ENCODE measurements at regions of chr20 and their contacts with region 1.

Region 1: GRCh38 chr20:58236612-58237330 is 8.3 kb upstream of the ANKRD60 start:
- DNase-seq: no peak
- ATAC-seq: peak; percentile 97
- H3K4me3 ChIP-seq: no peak overlapping the region; a peak in 1 of 4 replicates
- H3K27ac ChIP-seq: no peak overlapping the region
- H3K4me1 ChIP-seq: no peaks in the 10 kb centered on the region
- H3K27me3 ChIP-seq: no peaks in the 10 kb centered on the region
- CTCF ChIP-seq: peak; percentile 67 to 95 (median 94)
- POLR2A ChIP-seq: no peak
- RAD21 ChIP-seq: peak; percentile 86

Region 2: GRCh38 chr20:58447511-58448391 is 211.0 kb after region 1 on chr20:
- CTCF ChIA-PET with region 1: no interaction called
- POLR2A ChIA-PET with region 1: no interaction called
- RAD21 ChIA-PET with region 1: no interaction called
- intact Hi-C with region 1: loop called (anchors 1 kb)
- DNase-seq: peak; percentile 33
- ATAC-seq: peak; percentile 89
- H3K4me3 ChIP-seq: no peak overlapping the region
- H3K27ac ChIP-seq: no peak overlapping the region
- H3K4me1 ChIP-seq: no peaks in the 10 kb centered on the region
- H3K27me3 ChIP-seq: no peaks in the 10 kb centered on the region
- CTCF ChIP-seq: peak; percentile 55 to 78 (median 73); a peak in 5 of 6 replicates
- POLR2A ChIP-seq: no peak
- RAD21 ChIP-seq: peak; percentile 70

Region 3: DNA sequence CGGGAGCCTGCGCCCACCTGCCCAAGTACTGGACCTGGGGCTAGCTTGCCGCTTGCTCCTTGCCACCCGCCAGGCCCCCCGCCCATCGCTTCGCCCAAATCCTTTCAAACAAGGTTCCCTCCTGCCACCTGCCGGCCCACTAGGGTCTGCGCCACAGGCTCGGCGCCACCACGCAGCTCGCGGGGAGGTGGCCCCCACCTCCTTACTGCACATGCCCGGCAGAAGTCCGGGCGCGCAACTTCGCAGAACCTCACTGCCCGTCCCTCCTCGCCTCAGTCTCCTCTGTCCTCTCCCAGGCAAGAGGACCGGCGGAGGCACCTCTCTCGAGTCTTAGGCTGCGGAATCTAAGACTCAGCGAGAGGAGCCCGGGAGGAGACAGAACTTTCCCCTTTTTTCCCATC is 602.7 kb after region 1 on chr20:
- CTCF ChIA-PET with region 1: no interaction called
- POLR2A ChIA-PET with region 1: no interaction called
- RAD21 ChIA-PET with region 1: no interaction called
- intact Hi-C with region 1: loop called (anchors 10 kb)
- DNase-seq: peak; percentile 7
- ATAC-seq: peak; percentile 89
- H3K4me3 ChIP-seq: no peak overlapping the region
- H3K27ac ChIP-seq: no peak overlapping the region
- H3K4me1 ChIP-seq: no peaks in the 10 kb centered on the region
- H3K27me3 ChIP-seq: peaks cover 12% of the 10 kb centered on the region; the same call in 1 of the 2 replicates
- CTCF ChIP-seq: peak; percentile 30 to 48 (median 41); a peak in 4 of 6 replicates
- POLR2A ChIP-seq: no peak
- RAD21 ChIP-seq: peak; percentile 66

Measured in HCT116 (cell line).